ENCODE measurements at regions of chr12 and their contacts with region 1.

Region 1: GRCh38 chr12:46372544-46373110 is at the start of gene SLC38A2:
- DNase-seq: peak; percentile 97
- ATAC-seq: peak; percentile 86
- H3K4me3 Mint-ChIP-seq: peak within 1 kb of the TSS; percentile 96
- H3K27ac Mint-ChIP-seq: peak within 1 kb of the TSS; percentile 99
- H3K4me1 Mint-ChIP-seq: peaks cover 52% of the 10 kb centered on the region
- H3K27me3 Mint-ChIP-seq: peaks cover 4% of the 10 kb centered on the region
- CTCF ChIP-seq: no peak
- total RNA-seq, gene SLC38A2: 216 to 219 TPM

Region 2: GRCh38 chr12:46217541-46218321 is 154.9 kb before region 1 on chr12:
- CTCF ChIA-PET with region 1: no interaction called
- POLR2A ChIA-PET with region 1: interaction called, 5 read pairs
- intact Hi-C with region 1: loop called (anchors 5 kb)
- DNase-seq: peak; percentile 86
- ATAC-seq: no peak
- H3K4me3 Mint-ChIP-seq: peak overlapping the region; percentile 70
- H3K27ac Mint-ChIP-seq: peak overlapping the region; percentile 99
- H3K4me1 Mint-ChIP-seq: peaks cover 95% of the 10 kb centered on the region
- H3K27me3 Mint-ChIP-seq: no peaks in the 10 kb centered on the region
- CTCF ChIP-seq: no peak

Region 3: GRCh38 chr12:46332260-46332659 is 40.4 kb before region 1 on chr12:
- CTCF ChIA-PET with region 1: no interaction called
- POLR2A ChIA-PET with region 1: no interaction called
- intact Hi-C with region 1: no loop called
- DNase-seq: no peak
- ATAC-seq: no peak
- H3K4me3 Mint-ChIP-seq: no peak overlapping the region
- H3K27ac Mint-ChIP-seq: no peak overlapping the region
- H3K4me1 Mint-ChIP-seq: no peaks in the 10 kb centered on the region
- H3K27me3 Mint-ChIP-seq: no peaks in the 10 kb centered on the region
- CTCF ChIP-seq: no peak

Region 4: GRCh38 chr12:46357438-46358324 is 14.9 kb before region 1 on chr12:
- CTCF ChIA-PET with region 1: no interaction called
- POLR2A ChIA-PET with region 1: interaction called, 22 read pairs
- intact Hi-C with region 1: no loop called
- DNase-seq: no peak
- ATAC-seq: no peak
- H3K4me3 Mint-ChIP-seq: no peak overlapping the region
- H3K27ac Mint-ChIP-seq: peak overlapping the region; percentile 47
- H3K4me1 Mint-ChIP-seq: peaks cover 37% of the 10 kb centered on the region
- H3K27me3 Mint-ChIP-seq: no peaks in the 10 kb centered on the region
- CTCF ChIP-seq: no peak

Region 5: GRCh38 chr12:46459861-46460545 is 87.4 kb after region 1 on chr12:
- CTCF ChIA-PET with region 1: no interaction called
- POLR2A ChIA-PET with region 1: interaction called, 10 read pairs
- intact Hi-C with region 1: loop called (anchors 5 kb)
- DNase-seq: peak; percentile 15
- ATAC-seq: no peak
- H3K4me3 Mint-ChIP-seq: peak overlapping the region; percentile 45
- H3K27ac Mint-ChIP-seq: peak overlapping the region; percentile 97
- H3K4me1 Mint-ChIP-seq: peaks cover 61% of the 10 kb centered on the region
- H3K27me3 Mint-ChIP-seq: no peaks in the 10 kb centered on the region
- CTCF ChIP-seq: no peak

Region 6: GRCh38 chr12:46499901-46500300 is 127.3 kb after region 1 on chr12:
- CTCF ChIA-PET with region 1: no interaction called
- POLR2A ChIA-PET with region 1: no interaction called
- intact Hi-C with region 1: no loop called
- DNase-seq: no peak
- ATAC-seq: no peak
- H3K4me3 Mint-ChIP-seq: no peak overlapping the region
- H3K27ac Mint-ChIP-seq: no peak overlapping the region
- H3K4me1 Mint-ChIP-seq: peaks cover 2% of the 10 kb centered on the region
- H3K27me3 Mint-ChIP-seq: no peaks in the 10 kb centered on the region
- CTCF ChIP-seq: no peak

Region 7: DNA sequence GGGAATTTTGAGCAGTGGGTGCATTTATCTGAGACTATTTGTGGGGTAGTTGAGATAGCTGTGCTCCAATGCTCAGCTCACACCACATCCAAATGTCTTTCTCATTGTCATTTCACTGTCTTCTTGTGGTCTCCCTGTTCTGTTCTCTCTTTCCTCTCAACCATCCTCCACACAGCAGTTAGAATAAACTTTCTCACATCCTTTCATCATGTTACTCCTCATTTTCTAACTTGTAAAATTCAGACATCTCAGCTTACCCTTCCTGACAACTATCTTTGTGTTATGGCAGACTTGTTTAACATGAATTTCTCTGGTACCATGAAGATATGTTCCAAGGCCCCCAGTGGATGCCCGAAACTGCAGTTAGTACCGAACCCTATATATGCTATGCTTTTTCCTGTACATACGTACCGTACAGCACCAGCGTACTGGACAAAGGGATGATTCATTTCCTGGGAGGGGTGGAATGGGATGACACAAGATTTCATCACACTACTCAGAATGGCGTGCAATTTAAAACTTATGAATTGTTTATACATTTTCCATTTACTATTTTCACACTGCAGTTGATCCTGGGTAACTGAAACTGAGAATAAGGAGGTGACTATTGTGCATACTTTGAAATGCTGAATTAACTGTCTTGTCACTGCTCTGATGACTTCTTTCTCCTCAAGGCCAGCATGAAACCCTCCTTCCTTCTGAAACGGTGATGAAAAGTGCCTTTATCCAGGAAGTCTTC is 177.1 kb after region 1 on chr12:
- CTCF ChIA-PET with region 1: no interaction called
- POLR2A ChIA-PET with region 1: interaction called, 5 read pairs
- intact Hi-C with region 1: loop called (anchors 5 kb)
- DNase-seq: peak; percentile 75
- ATAC-seq: peak; percentile 86
- H3K4me3 Mint-ChIP-seq: peak overlapping the region; percentile 53
- H3K27ac Mint-ChIP-seq: peak overlapping the region; percentile 98
- H3K4me1 Mint-ChIP-seq: peaks cover 56% of the 10 kb centered on the region
- H3K27me3 Mint-ChIP-seq: no peaks in the 10 kb centered on the region
- CTCF ChIP-seq: no peak